Endothelial cell of umbilical vein (primary cell): ENCODE measurements at regions of chr1 and their contacts with region 1.

Region 1: GRCh38 chr1:48817505-48818114 is 40.9 kb upstream of the BEND5 start:
- DNase-seq: no peak
- H3K4me3 ChIP-seq: no peak overlapping the region
- H3K27ac ChIP-seq: no peak overlapping the region
- H3K4me1 ChIP-seq: no peaks in the 10 kb centered on the region
- H3K27me3 ChIP-seq: no peaks in the 10 kb centered on the region
- CTCF ChIP-seq: peak; percentile 7 to 40
- POLR2A ChIP-seq: no peak

Region 2: GRCh38 chr1:48677306-48678287 is 140.0 kb before region 1 on chr1:
- CTCF ChIA-PET with region 1: interaction called, 5 read pairs
- POLR2A ChIA-PET with region 1: no interaction called
- dilution Hi-C with region 1: no loop called
- intact Hi-C with region 1: loop called (anchors 1 kb)
- DNase-seq: peak; percentile 43
- H3K4me3 ChIP-seq: no peak overlapping the region
- H3K27ac ChIP-seq: no peak overlapping the region
- H3K4me1 ChIP-seq: no peaks in the 10 kb centered on the region
- H3K27me3 ChIP-seq: no peaks in the 10 kb centered on the region
- CTCF ChIP-seq: peak; percentile 53 to 71
- POLR2A ChIP-seq: no peak

Region 3: GRCh38 chr1:48750109-48750508 is 67.5 kb before region 1 on chr1:
- CTCF ChIA-PET with region 1: no interaction called
- POLR2A ChIA-PET with region 1: no interaction called
- dilution Hi-C with region 1: no loop called
- intact Hi-C with region 1: no loop called
- DNase-seq: no peak
- H3K4me3 ChIP-seq: no peak overlapping the region
- H3K27ac ChIP-seq: no peak overlapping the region
- H3K4me1 ChIP-seq: no peaks in the 10 kb centered on the region
- H3K27me3 ChIP-seq: no peaks in the 10 kb centered on the region
- CTCF ChIP-seq: no peak
- POLR2A ChIP-seq: no peak